ENCODE measurements at regions of chr9 and their contacts with region 1.

Region 1: DNA sequence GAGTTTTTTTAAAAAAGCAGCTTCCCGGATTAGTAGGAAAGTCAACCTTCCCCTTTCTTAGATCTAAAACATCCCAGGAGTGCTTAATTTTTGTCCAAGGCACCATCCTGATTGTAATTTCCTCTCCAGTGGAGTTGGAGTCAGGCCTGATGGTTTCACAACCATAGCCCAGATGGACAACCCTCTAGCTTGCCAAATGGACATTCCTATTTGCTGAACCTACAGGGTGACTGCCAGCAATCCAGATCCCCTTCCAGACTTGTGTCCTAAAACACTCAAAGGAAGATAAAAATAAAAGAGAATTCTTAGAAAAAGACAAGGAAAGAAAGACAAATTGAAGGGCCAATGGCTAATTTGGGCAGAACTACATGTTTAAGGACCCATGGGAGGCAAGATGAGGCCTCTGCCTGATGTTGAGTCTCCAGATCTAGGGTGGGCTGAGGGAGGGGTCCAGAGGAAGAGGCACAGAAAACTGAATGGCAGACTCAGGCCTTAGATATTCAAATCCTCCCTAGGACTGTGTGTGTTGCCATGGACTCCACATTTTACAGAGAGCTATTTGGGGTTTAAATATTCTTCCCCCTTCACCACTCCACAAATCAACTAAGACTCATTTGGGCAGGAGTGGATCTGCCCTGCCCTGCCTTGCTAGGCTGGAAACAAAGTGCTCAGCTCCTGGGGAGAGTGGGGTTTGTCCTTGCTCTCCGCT is 38.5 kb upstream of the SLC44A1 start:
- DNase-seq: peak; percentile 77 to 78
- ATAC-seq: peak; percentile 99
- H3K4me3 ChIP-seq: no peak overlapping the region
- H3K27ac ChIP-seq: peak overlapping the region; percentile 41 to 73 (median 70)
- H3K4me1 ChIP-seq: peaks cover 16 to 29% of the 10 kb centered on the region in 2 donors
- H3K27me3 ChIP-seq: no peaks in the 10 kb centered on the region
- CTCF ChIP-seq: no peak
- POLR2A ChIP-seq: no peak

Region 2: GRCh38 chr9:105244003-105244733 is 38.2 kb after region 1 on chr9 and contains the start of gene SLC44A1:
- in situ Hi-C with region 1: no loop called
- intact Hi-C with region 1: loop called (anchors 5 kb)
- DNase-seq: peak; percentile 91 to 95
- ATAC-seq: peak; percentile 89 to 90
- H3K4me3 ChIP-seq: peak within 1 kb of the TSS; percentile 76 to 96 (median 84)
- H3K27ac ChIP-seq: peak within 1 kb of the TSS; percentile 71 to 82 (median 74)
- H3K4me1 ChIP-seq: peaks cover 10 to 16% of the 10 kb centered on the region in 2 donors
- H3K27me3 ChIP-seq: no peaks in the 10 kb centered on the region
- CTCF ChIP-seq: peak in 1 of 5 experiments; percentile 9
- POLR2A ChIP-seq: peak; percentile 85 to 88
- total RNA-seq, gene SLC44A1: 5.4 to 15.9 (median 11.3) TPM

Measured in gastrocnemius medialis (tissue), 4 donors.